Endothelial cell of umbilical vein (primary cell): ENCODE measurements at regions of chr3 and their contacts with region 1.

Region 1: GRCh38 chr3:127574880-127575878 is 15.4 kb downstream of the TPRA1 start:
- DNase-seq: peak; percentile 93
- H3K4me3 ChIP-seq: no peak overlapping the region
- H3K27ac ChIP-seq: no peak overlapping the region
- H3K4me1 ChIP-seq: no peaks in the 10 kb centered on the region
- H3K27me3 ChIP-seq: no peaks in the 10 kb centered on the region
- CTCF ChIP-seq: peak; percentile 99
- POLR2A ChIP-seq: no peak

Region 2: GRCh38 chr3:127590593-127591477 is 15.7 kb after region 1 on chr3 and contains the start of gene TPRA1:
- CTCF ChIA-PET with region 1: interaction called, 108 read pairs
- POLR2A ChIA-PET with region 1: no interaction called
- dilution Hi-C with region 1: no loop called
- intact Hi-C with region 1: loop called (anchors 1 kb)
- DNase-seq: peak; percentile 96
- H3K4me3 ChIP-seq: peak within 1 kb of the TSS; percentile 73 to 80 (median 78)
- H3K27ac ChIP-seq: peak within 1 kb of the TSS; percentile 66
- H3K4me1 ChIP-seq: peaks cover 15% of the 10 kb centered on the region
- H3K27me3 ChIP-seq: no peaks in the 10 kb centered on the region
- CTCF ChIP-seq: no peak
- POLR2A ChIP-seq: peak; percentile 23
- total RNA-seq, gene TPRA1: 34.3 and 34.6 TPM in 2 replicates

Region 3: GRCh38 chr3:127646501-127647046 is 71.4 kb after region 1 on chr3:
- CTCF ChIA-PET with region 1: interaction called, 15 read pairs
- POLR2A ChIA-PET with region 1: no interaction called
- dilution Hi-C with region 1: no loop called
- intact Hi-C with region 1: no loop called
- DNase-seq: no peak
- H3K4me3 ChIP-seq: no peak overlapping the region
- H3K27ac ChIP-seq: no peak overlapping the region
- H3K4me1 ChIP-seq: no peaks in the 10 kb centered on the region
- H3K27me3 ChIP-seq: no peaks in the 10 kb centered on the region
- CTCF ChIP-seq: no peak
- POLR2A ChIP-seq: no peak

Region 4: GRCh38 chr3:127679285-127680145 is 104.3 kb after region 1 on chr3:
- CTCF ChIA-PET with region 1: interaction called, 11 read pairs
- POLR2A ChIA-PET with region 1: no interaction called
- dilution Hi-C with region 1: no loop called
- intact Hi-C with region 1: no loop called
- DNase-seq: no peak
- H3K4me3 ChIP-seq: no peak overlapping the region
- H3K27ac ChIP-seq: no peak overlapping the region
- H3K4me1 ChIP-seq: no peaks in the 10 kb centered on the region
- H3K27me3 ChIP-seq: no peaks in the 10 kb centered on the region
- CTCF ChIP-seq: peak in 1 of 2 donors; percentile 29
- POLR2A ChIP-seq: no peak

Region 5: DNA sequence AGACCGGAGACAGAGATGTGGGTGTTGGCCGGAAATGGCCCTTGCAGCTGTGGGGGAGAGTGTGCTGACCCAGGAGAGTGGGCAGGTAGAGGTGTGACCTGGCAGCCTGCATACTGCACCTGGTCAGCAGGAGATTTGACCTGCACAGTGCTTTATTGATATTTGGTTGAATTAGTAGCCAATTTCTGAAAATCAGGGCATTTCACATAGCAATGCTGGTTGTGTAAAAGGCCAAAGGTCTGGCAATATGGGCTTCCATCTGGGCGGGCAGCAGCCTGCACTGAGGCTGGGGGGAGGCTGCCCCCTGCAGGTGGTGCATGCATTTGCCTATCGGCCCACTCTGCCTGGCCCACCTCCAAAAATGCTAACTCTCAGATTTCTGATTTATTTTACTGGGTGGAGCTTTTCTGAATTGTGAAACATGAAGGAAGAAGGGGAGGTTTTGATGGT is 256.6 kb after region 1 on chr3:
- CTCF ChIA-PET with region 1: interaction called, 7 read pairs
- POLR2A ChIA-PET with region 1: no interaction called
- dilution Hi-C with region 1: no loop called
- intact Hi-C with region 1: loop called (anchors 1 kb)
- DNase-seq: peak; percentile 35
- H3K4me3 ChIP-seq: no peak overlapping the region
- H3K27ac ChIP-seq: no peak overlapping the region
- H3K4me1 ChIP-seq: no peaks in the 10 kb centered on the region
- H3K27me3 ChIP-seq: no peaks in the 10 kb centered on the region
- CTCF ChIP-seq: peak; percentile 73 to 82
- POLR2A ChIP-seq: no peak

Region 6: DNA sequence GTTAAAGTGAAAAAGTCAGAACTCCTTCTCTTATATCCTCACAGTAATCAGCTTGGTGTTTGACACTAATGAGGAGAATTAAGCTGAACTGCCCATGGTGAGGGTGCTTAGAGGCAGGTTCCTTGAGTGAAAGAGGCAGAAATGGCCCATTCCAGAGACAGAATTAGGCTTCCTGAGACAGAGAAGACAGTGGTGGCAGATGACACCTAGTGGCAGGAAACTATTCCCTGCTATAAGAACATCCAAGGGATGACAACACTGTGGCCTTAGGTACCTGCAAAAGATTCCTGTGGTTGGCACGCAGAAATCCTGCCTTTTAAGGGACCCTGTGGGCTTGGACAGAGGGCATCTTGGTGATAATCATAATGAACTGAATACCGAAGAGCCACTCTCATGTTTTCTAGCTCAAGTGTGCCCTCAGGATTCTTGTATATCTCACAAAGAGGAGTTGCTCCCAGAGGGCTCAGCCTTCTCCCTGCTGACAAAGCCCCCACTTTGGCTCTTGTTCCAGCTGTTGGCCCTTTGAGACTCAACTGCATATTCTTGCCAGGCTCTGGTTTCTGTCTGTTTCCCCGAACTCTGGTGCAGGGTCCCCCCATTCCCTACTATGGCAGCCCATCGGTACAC is 395.9 kb after region 1 on chr3:
- CTCF ChIA-PET with region 1: interaction called, 12 read pairs
- POLR2A ChIA-PET with region 1: no interaction called
- dilution Hi-C with region 1: no loop called
- intact Hi-C with region 1: loop called (anchors 1 kb)
- DNase-seq: peak; percentile 27
- H3K4me3 ChIP-seq: no peak overlapping the region
- H3K27ac ChIP-seq: no peak overlapping the region
- H3K4me1 ChIP-seq: no peaks in the 10 kb centered on the region
- H3K27me3 ChIP-seq: peaks cover 37 to 77% of the 10 kb centered on the region in 2 experiments
- CTCF ChIP-seq: peak; percentile 35 to 53
- POLR2A ChIP-seq: no peak